Panc1 (cell line): ENCODE measurements at regions of chr10 and their contacts with region 1.

Region 1: GRCh38 chr10:68318331-68319059 is 13.4 kb upstream of the HNRNPH3 start:
- DNase-seq: no peak
- ATAC-seq: no peak
- H3K4me3 ChIP-seq: no peak overlapping the region
- H3K27ac ChIP-seq: peak overlapping the region; percentile 30; the same call in 1 of the 2 replicates
- H3K4me1 ChIP-seq: no peaks in the 10 kb centered on the region
- H3K27me3 ChIP-seq: no peaks in the 10 kb centered on the region
- CTCF ChIP-seq: no peak

Region 2: GRCh38 chr10:67539312-67539711 is 779.2 kb before region 1 on chr10:
- CTCF ChIA-PET with region 1: no interaction called
- POLR2A ChIA-PET with region 1: no interaction called
- in situ Hi-C with region 1: no loop called
- intact Hi-C with region 1: no loop called
- DNase-seq: no peak
- ATAC-seq: no peak
- H3K4me3 ChIP-seq: no peak overlapping the region
- H3K27ac ChIP-seq: no peak overlapping the region
- H3K4me1 ChIP-seq: peaks cover 4% of the 10 kb centered on the region; the same call in 1 of the 2 replicates
- H3K27me3 ChIP-seq: peaks cover 14% of the 10 kb centered on the region; the same call in 1 of the 2 replicates
- CTCF ChIP-seq: no peak

Region 3: GRCh38 chr10:68184546-68184945 is 133.9 kb before region 1 on chr10:
- CTCF ChIA-PET with region 1: no interaction called
- POLR2A ChIA-PET with region 1: interaction called, 19 read pairs
- in situ Hi-C with region 1: no loop called
- intact Hi-C with region 1: no loop called
- DNase-seq: no peak
- ATAC-seq: peak; percentile 42
- H3K4me3 ChIP-seq: no peak overlapping the region
- H3K27ac ChIP-seq: no peak overlapping the region
- H3K4me1 ChIP-seq: no peaks in the 10 kb centered on the region
- H3K27me3 ChIP-seq: no peaks in the 10 kb centered on the region
- CTCF ChIP-seq: no peak

Region 4: GRCh38 chr10:68223535-68224165 is 94.8 kb before region 1 on chr10:
- CTCF ChIA-PET with region 1: no interaction called
- POLR2A ChIA-PET with region 1: no interaction called
- in situ Hi-C with region 1: no loop called
- intact Hi-C with region 1: no loop called
- DNase-seq: no peak
- ATAC-seq: peak; percentile 70
- H3K4me3 ChIP-seq: no peak overlapping the region
- H3K27ac ChIP-seq: no peak overlapping the region
- H3K4me1 ChIP-seq: peaks cover 10% of the 10 kb centered on the region; the same call in 1 of the 2 replicates
- H3K27me3 ChIP-seq: no peaks in the 10 kb centered on the region
- CTCF ChIP-seq: peak; percentile 47

Region 5: DNA sequence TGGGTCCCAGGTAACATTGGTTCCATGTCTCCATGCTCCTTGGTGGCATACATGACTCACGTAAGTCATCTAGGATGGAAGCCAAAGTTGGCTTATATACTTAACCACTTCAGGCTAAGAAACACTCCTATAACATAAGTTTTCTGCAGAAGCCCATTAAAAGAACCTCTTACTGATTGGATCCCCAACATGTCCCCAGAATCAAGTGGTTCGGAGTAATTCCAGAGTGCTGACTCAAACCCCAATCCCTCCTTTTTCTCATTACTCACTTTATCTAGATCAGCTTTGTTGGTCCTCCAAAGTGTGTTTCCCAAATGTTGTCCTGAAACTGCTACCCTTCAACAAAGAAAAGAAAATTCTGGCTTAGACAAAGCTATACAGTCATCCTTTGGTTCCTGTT is 76.4 kb before region 1 on chr10:
- CTCF ChIA-PET with region 1: no interaction called
- POLR2A ChIA-PET with region 1: no interaction called
- in situ Hi-C with region 1: no loop called
- intact Hi-C with region 1: loop called (anchors 2 kb)
- DNase-seq: no peak
- ATAC-seq: no peak
- H3K4me3 ChIP-seq: no peak overlapping the region
- H3K27ac ChIP-seq: no peak overlapping the region
- H3K4me1 ChIP-seq: no peaks in the 10 kb centered on the region
- H3K27me3 ChIP-seq: no peaks in the 10 kb centered on the region
- CTCF ChIP-seq: no peak

Region 6: DNA sequence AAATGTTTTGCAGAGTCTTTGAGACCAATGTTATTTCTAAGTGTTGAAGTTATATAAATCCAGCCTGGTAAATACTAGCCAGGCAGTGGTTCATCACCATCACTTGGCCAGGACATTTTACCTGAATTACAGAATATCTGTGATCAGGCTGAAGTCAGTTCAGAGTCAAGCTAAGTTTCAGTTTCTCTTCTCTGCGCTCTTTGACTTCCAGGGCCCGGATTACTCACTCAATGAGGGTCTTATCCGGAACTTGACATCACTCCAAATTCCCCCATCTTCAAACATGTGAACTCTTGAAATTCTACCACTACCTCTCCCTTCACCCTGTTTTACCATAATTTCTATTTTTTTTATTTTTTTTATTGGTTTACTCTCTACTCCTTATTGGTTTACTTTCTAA is 365.9 kb after region 1 on chr10:
- CTCF ChIA-PET with region 1: no interaction called
- POLR2A ChIA-PET with region 1: no interaction called
- in situ Hi-C with region 1: no loop called
- intact Hi-C with region 1: no loop called
- DNase-seq: no peak
- ATAC-seq: no peak
- H3K4me3 ChIP-seq: no peak overlapping the region
- H3K27ac ChIP-seq: no peak overlapping the region
- H3K4me1 ChIP-seq: no peaks in the 10 kb centered on the region
- H3K27me3 ChIP-seq: no peaks in the 10 kb centered on the region
- CTCF ChIP-seq: no peak